CD4-positive, alpha-beta memory T cell (primary cell): ENCODE measurements at regions of chr17 and their contacts with region 1.

Region 1: DNA sequence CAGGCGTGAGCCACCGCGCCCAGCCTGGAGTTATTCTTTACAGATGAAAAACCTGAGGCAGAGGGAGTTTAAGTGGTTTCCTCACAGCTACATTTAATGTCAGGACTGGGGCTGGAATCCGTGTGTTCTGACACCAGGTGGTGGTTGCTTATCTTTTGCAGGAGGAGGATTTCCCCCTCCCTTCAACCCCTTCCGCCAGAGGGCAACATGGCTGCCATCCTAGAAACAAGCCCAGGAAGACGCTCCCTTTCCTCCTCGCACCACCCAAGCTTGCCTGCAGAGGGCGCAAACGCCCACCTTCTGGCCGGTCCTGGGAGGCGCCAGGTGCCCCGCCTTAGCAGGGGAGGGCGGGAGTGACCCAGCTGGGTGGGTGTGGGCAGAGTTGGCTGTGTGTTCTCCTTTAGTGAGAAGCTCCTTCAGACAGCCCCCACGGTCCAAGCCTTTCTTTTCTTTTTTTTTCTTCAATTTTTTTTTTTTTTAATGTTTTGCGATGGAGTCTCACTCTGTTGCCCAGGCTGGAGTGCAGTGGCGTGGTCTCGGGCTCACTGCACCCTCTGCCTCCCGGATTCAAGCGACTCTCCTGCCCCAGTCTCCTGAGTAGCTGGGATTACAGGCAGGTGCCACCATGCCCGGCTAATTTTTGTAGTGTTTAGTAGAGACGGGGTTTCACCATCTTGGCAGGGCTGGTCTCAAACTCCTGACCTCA is 9.9 kb upstream of the RAP1GAP2 start:
- DNase-seq: peak; percentile 87 to 94 (median 90)
- H3K4me3 ChIP-seq: no peak overlapping the region
- H3K4me3 Mint-ChIP-seq: peak overlapping the region in 6 of 8 donors; percentile 3 to 39 (median 30)
- H3K27ac ChIP-seq: no peak overlapping the region
- H3K27ac Mint-ChIP-seq: peak overlapping the region in 1 of 7 donors; percentile 35
- H3K4me1 ChIP-seq: peaks cover 23% of the 10 kb centered on the region
- H3K4me1 Mint-ChIP-seq: peaks cover 8 to 31% (median 14%) of the 10 kb centered on the region in 4 donors
- H3K27me3 ChIP-seq: no peaks in the 10 kb centered on the region
- H3K27me3 Mint-ChIP-seq: peaks cover 0 to 1% of the 10 kb centered on the region in 2 donors

Region 2: DNA sequence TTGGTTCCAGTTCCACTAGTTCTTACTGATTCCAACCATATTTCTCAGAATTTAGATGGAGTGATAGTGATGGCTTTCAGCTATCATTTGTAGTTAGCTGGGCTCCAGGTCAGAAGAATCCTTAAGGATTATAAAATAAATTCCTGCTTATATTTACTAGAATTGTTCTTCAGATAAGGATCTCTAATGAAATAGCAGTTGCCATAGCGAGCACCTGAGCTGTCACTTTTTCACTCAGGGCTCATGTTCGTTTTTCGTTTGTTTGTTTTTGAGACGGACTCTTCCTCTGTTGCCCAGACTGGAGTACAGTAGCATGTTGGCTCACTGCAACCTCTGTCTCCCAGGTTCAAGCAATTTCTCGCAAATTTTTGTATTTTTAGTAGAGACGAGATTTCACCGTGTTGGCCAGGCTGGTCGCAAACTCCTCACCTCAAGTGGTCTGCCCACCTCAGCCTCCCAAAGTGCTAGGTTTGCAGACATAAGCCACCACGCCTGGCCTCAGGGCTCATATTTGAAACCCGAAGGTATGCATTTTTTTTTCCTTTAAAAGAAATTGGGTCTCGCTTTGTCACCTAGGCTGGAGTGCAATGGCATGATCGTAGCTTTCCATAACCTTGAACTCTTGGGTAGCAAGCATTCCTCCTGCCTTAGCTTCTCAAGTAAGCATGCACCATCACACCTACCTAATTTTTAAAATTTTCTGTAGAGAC is 150.0 kb before region 1 on chr17:
- CTCF ChIA-PET with region 1: no interaction called
- POLR2A ChIA-PET with region 1: no interaction called
- intact Hi-C with region 1: no loop called
- DNase-seq: no peak
- H3K4me3 ChIP-seq: no peak overlapping the region
- H3K4me3 Mint-ChIP-seq: no peak overlapping the region
- H3K27ac ChIP-seq: no peak overlapping the region
- H3K27ac Mint-ChIP-seq: peak overlapping the region in 3 of 7 donors; percentile 33 to 46 (median 41)
- H3K4me1 ChIP-seq: peaks cover 39% of the 10 kb centered on the region
- H3K4me1 Mint-ChIP-seq: peaks cover 32 to 77% (median 54%) of the 10 kb centered on the region in 4 donors
- H3K27me3 ChIP-seq: no peaks in the 10 kb centered on the region
- H3K27me3 Mint-ChIP-seq: no peaks in the 10 kb centered on the region

Region 3: DNA sequence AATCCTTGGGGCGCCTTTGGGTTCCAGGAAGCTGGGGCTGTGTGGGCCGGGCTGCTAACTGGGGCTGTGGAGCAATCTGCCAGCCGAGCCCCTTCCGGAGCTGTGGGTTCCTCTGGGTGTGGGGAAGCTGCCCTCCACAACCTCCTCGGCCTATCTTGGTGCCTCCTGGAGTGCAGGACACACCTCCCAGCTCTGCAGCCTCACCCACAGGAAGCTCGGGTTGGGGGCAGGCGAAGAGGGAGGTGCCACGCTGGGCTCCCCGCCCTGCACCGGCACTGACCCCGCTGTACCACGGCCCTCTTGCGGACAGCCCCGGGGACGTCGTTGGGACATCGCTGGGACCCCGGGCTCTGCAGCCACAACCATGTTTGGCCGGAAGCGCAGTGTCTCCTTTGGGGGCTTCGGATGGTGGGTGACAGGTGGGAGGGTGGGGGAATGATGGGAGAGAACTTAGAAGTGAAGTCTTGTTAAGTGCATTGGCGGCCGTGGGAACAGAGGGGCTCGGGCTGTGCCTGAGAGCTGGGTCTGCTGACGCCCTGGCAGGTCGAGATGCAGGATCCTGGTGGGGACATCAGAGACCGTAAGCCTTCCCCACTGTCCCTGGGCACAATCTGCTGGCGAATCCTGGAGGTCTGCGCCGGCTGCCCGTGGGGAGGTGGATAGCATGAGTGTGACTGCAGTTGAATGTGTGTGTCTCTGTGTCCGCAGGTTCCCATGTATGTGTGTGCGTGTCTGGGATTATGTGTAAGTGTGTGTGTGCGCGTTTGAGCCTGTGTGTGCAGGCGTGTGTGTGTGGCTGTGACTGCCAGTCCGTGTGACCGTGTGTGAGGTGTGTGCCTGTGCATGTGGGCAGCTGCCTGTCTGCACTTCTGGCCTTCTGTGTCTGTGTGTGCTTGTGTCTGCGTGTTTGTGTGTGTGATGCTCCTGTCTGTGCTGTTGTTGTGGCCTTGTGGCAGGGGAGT is 10.1 kb after region 1 on chr17 and contains the start of gene RAP1GAP2:
- CTCF ChIA-PET with region 1: interaction called, 23 read pairs
- POLR2A ChIA-PET with region 1: interaction called, 22 read pairs
- intact Hi-C with region 1: no loop called
- DNase-seq: peak; percentile 81 to 89 (median 85)
- H3K4me3 ChIP-seq: peak within 1 kb of the TSS; percentile 83 to 94
- H3K4me3 Mint-ChIP-seq: peak within 1 kb of the TSS; percentile 90 to 99 (median 97)
- H3K27ac ChIP-seq: peak within 1 kb of the TSS; percentile 51
- H3K27ac Mint-ChIP-seq: peak within 1 kb of the TSS; percentile 72 to 94 (median 89)
- H3K4me1 ChIP-seq: peaks cover 80% of the 10 kb centered on the region
- H3K4me1 Mint-ChIP-seq: peaks cover 47 to 88% (median 70%) of the 10 kb centered on the region in 4 donors
- H3K27me3 ChIP-seq: no peaks in the 10 kb centered on the region
- H3K27me3 Mint-ChIP-seq: no peaks in the 10 kb centered on the region
- total RNA-seq, gene RAP1GAP2: 9.0 to 9.9 TPM

Region 4: DNA sequence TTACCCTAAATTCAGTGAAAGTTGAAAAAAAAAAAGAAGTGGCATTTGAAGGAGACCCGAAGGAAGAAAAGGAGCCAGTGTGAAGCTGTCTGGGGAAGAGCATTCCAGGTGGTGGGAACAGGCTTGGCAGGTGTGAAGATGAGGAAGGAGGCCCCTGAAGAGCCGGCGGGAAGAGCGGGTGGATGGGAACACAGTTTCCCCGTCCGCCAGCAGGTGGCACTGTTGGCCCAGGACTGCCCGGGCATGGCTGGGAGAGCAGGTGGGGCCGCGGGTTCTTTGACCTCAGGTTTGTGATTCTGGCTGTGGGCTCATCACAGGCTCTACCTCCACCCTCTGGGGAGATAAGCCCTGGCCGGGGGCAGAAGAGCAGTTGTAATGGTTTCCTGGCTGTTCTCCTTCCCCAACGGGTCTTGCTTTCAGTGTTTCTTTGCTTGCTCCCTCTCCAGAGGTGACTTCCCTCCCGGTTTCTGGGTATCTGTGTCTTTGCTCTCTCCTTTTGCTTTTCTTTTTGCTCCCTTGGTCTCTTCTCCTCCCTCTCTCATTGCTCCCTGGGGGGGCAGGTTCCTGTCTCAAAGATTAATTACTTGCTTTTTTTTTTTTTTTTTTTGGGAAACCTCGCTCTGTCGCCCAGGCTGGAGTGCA is 42.2 kb after region 1 on chr17:
- CTCF ChIA-PET with region 1: interaction called, 146 read pairs
- POLR2A ChIA-PET with region 1: interaction called, 3 read pairs
- intact Hi-C with region 1: loop called (anchors 1 kb)
- DNase-seq: peak; percentile 67 to 76 (median 71)
- H3K4me3 ChIP-seq: no peak overlapping the region
- H3K4me3 Mint-ChIP-seq: peak overlapping the region in 7 of 8 donors; percentile 42 to 70 (median 57)
- H3K27ac ChIP-seq: no peak overlapping the region
- H3K27ac Mint-ChIP-seq: peak overlapping the region in 5 of 7 donors; percentile 5 to 93 (median 67)
- H3K4me1 ChIP-seq: peaks cover 24% of the 10 kb centered on the region
- H3K4me1 Mint-ChIP-seq: peaks cover 20 to 40% (median 22%) of the 10 kb centered on the region in 4 donors
- H3K27me3 ChIP-seq: no peaks in the 10 kb centered on the region
- H3K27me3 Mint-ChIP-seq: peaks cover 0 to 1% of the 10 kb centered on the region in 2 donors

Region 5: GRCh38 chr17:2847381-2848333 is 61.3 kb after region 1 on chr17:
- CTCF ChIA-PET with region 1: interaction called, 55 read pairs
- POLR2A ChIA-PET with region 1: interaction called, 3 read pairs
- intact Hi-C with region 1: no loop called
- DNase-seq: no peak
- H3K4me3 ChIP-seq: no peak overlapping the region
- H3K4me3 Mint-ChIP-seq: peak overlapping the region in 1 of 8 donors; percentile 7
- H3K27ac ChIP-seq: no peak overlapping the region
- H3K27ac Mint-ChIP-seq: peak overlapping the region in 2 of 7 donors; percentile 9 to 48
- H3K4me1 ChIP-seq: peaks cover 14% of the 10 kb centered on the region
- H3K4me1 Mint-ChIP-seq: peaks cover 12 to 32% (median 22%) of the 10 kb centered on the region in 4 donors
- H3K27me3 ChIP-seq: no peaks in the 10 kb centered on the region
- H3K27me3 Mint-ChIP-seq: peaks cover 0 to 2% of the 10 kb centered on the region in 2 donors

Region 6: DNA sequence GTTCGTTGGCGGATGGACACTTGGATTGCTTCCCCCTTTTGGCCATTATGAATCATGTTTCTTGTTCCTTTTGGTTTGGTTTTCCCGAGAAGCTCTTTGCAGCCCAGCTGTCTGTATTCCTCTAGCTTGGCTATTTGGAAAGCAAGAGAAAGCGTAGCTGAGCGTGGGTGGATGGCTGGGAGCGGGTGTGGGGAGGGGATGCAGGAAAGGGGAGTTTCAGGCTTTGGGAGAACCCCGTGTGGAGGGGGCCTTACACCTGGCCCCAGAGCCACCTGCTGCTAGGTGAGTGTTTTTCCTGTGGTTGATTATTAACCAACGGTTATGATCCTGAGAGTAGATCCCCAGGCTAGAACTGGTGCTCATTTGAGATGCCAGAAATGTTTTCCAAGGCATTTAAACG is 113.6 kb after region 1 on chr17:
- CTCF ChIA-PET with region 1: no interaction called
- POLR2A ChIA-PET with region 1: no interaction called
- intact Hi-C with region 1: no loop called
- DNase-seq: no peak
- H3K4me3 ChIP-seq: no peak overlapping the region
- H3K4me3 Mint-ChIP-seq: no peak overlapping the region
- H3K27ac ChIP-seq: no peak overlapping the region
- H3K27ac Mint-ChIP-seq: no peak overlapping the region
- H3K4me1 ChIP-seq: no peaks in the 10 kb centered on the region
- H3K4me1 Mint-ChIP-seq: peaks cover 11 to 31% (median 14%) of the 10 kb centered on the region in 4 donors
- H3K27me3 ChIP-seq: no peaks in the 10 kb centered on the region
- H3K27me3 Mint-ChIP-seq: no peaks in the 10 kb centered on the region

Region 7: GRCh38 chr17:3012926-3013581 is 226.7 kb after region 1 on chr17:
- CTCF ChIA-PET with region 1: interaction called, 34 read pairs
- POLR2A ChIA-PET with region 1: interaction called, 3 read pairs
- intact Hi-C with region 1: loop called (anchors 1 kb)
- DNase-seq: peak in 4 of 5 donors; percentile 24 to 36 (median 30)
- H3K4me3 ChIP-seq: no peak overlapping the region
- H3K4me3 Mint-ChIP-seq: no peak overlapping the region
- H3K27ac ChIP-seq: no peak overlapping the region
- H3K27ac Mint-ChIP-seq: peak overlapping the region in 3 of 7 donors; percentile 10 to 29 (median 29)
- H3K4me1 ChIP-seq: no peaks in the 10 kb centered on the region
- H3K4me1 Mint-ChIP-seq: no peaks in the 10 kb centered on the region
- H3K27me3 ChIP-seq: no peaks in the 10 kb centered on the region
- H3K27me3 Mint-ChIP-seq: no peaks in the 10 kb centered on the region